Activated CD4-positive, alpha-beta T cell treated with anti-CD3 and anti-CD28 coated beads, Interleukin-2, amount 10 ng/mL, durations not matched to agents 7 days and 5 days (primary cell): ENCODE measurements at regions of chr19 and their contacts with region 1.

Region 1: DNA sequence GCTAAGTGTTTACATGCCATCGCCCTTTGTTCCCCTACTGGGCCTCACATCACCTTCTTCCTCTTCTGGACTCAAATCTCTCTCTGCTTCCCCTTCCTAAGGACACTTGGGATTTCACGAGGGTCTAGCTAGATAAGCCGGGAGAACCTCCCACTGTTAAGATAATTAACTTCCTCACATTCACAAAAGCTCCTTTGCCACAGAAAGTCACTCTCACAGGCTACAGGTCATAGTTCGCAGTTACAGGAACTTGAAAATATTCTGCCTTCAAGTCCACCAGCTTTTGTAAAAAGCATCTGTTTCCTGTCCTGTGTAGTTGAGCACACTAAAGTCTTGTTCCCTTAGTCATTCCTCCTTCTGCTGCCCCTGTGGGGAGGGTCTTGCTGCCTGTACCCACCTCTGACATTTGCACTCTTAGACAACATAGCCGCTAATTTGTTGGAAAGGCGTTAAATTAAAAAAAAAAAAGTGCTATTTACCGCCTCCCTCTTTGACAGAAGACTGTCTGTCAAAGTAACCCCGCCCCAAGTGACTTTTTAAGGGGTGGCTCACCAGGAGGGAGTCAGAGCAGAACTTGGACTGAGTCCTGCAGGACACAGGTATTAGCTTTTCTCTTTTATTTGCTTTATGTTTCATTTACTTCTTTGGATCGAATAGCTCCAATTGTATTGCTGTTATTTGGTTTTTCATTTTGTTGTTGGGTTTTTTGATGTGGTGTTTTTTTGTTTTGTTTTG is 26.8 kb upstream of the CEACAM21 start:
- DNase-seq: peak; percentile 92
- H3K4me3 Mint-ChIP-seq: peak overlapping the region; percentile 91
- H3K27ac Mint-ChIP-seq: peak overlapping the region; percentile 96
- H3K4me1 Mint-ChIP-seq: peaks cover 67% of the 10 kb centered on the region
- H3K27me3 Mint-ChIP-seq: no peaks in the 10 kb centered on the region

Region 2: GRCh38 chr19:41515015-41515652 is 34.0 kb before region 1 on chr19:
- CTCF ChIA-PET with region 1: no interaction called
- POLR2A ChIA-PET with region 1: no interaction called
- DNase-seq: no peak
- H3K4me3 Mint-ChIP-seq: no peak overlapping the region
- H3K27ac Mint-ChIP-seq: no peak overlapping the region
- H3K4me1 Mint-ChIP-seq: peaks cover 15% of the 10 kb centered on the region
- H3K27me3 Mint-ChIP-seq: peaks cover 22% of the 10 kb centered on the region

Region 3: GRCh38 chr19:41531438-41532311 is 17.4 kb before region 1 on chr19:
- CTCF ChIA-PET with region 1: interaction called, 11 read pairs
- POLR2A ChIA-PET with region 1: interaction called, 3 read pairs
- DNase-seq: peak; percentile 86
- H3K4me3 Mint-ChIP-seq: peak overlapping the region; percentile 67
- H3K27ac Mint-ChIP-seq: peak overlapping the region; percentile 90
- H3K4me1 Mint-ChIP-seq: peaks cover 67% of the 10 kb centered on the region
- H3K27me3 Mint-ChIP-seq: peaks cover 23% of the 10 kb centered on the region

Region 4: GRCh38 chr19:41563854-41564514 is 14.9 kb after region 1 on chr19:
- CTCF ChIA-PET with region 1: interaction called, 23 read pairs
- POLR2A ChIA-PET with region 1: interaction called, 8 read pairs
- DNase-seq: peak; percentile 71
- H3K4me3 Mint-ChIP-seq: peak overlapping the region; percentile 60
- H3K27ac Mint-ChIP-seq: no peak overlapping the region
- H3K4me1 Mint-ChIP-seq: peaks cover 64% of the 10 kb centered on the region
- H3K27me3 Mint-ChIP-seq: no peaks in the 10 kb centered on the region

Region 5: GRCh38 chr19:41688098-41688497 is 139.0 kb after region 1 on chr19 and contains the start of gene CEACAM7:
- CTCF ChIA-PET with region 1: no interaction called
- POLR2A ChIA-PET with region 1: no interaction called
- DNase-seq: no peak
- H3K4me3 Mint-ChIP-seq: no peak within 1 kb of the TSS
- H3K27ac Mint-ChIP-seq: no peak within 1 kb of the TSS
- H3K4me1 Mint-ChIP-seq: no peaks in the 10 kb centered on the region
- H3K27me3 Mint-ChIP-seq: peaks cover 11% of the 10 kb centered on the region
- total RNA-seq, gene CEACAM7: not detected